PC-9 (cell line): ENCODE measurements at regions of chr4 and their contacts with region 1.

Region 1: DNA sequence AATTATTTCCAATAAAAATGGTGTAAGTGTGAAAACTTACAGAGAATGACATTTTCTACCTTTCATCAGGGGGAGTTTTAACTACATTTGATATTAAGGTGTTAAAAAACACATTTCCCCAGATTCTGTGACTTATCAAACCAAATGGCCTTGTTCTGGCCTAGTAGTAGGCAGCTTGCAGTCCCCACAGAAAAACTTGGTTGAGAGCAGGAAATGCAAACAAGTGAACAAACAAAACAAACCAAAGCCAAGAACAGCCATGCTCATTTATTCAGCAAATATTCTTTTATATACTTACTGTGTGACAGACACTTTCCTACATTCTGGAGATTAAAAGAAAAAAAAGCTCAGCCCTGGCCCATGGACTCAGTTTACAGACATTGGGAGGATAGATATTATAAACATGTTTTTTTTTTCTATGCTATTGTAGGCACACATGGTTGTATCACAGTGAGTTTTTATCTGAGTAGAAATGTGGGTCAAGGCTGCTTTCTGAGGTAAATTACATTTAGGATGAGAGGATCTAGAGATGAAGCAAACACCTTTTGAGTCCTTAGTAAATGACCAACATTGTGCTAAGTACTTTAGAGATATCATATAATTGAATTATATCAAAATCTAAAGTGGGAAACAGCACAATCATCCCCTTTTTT is 449.2 kb upstream of the AADAT start:
- DNase-seq: no peak
- H3K4me3 ChIP-seq: no peak overlapping the region
- H3K27ac ChIP-seq: no peak overlapping the region
- H3K4me1 ChIP-seq: no peaks in the 10 kb centered on the region
- H3K27me3 ChIP-seq: no peaks in the 10 kb centered on the region
- CTCF ChIP-seq: no peak

Region 2: DNA sequence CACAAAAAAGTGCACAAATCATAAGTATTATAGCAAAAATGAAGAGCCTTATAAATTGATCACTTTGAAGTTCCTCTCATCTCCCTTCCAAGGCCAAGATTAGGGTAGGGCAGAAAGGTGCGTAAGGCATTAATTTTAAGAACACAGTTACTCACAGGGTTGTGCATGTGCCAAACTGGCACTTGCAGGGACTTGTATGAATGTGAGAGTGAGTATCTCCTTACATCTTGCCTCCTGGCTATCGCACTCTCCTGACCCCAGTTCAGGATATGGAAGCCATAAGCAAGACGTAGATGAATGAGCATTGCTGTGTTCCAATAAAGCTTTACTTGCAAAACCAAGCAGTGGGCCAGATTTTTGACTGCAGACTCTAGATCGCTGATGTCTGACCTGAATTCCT is 60.9 kb after region 1 on chr4:
- CTCF ChIA-PET with region 1: no interaction called
- POLR2A ChIA-PET with region 1: no interaction called
- intact Hi-C with region 1: loop called (anchors 2 kb)
- DNase-seq: no peak
- H3K4me3 ChIP-seq: no peak overlapping the region
- H3K27ac ChIP-seq: no peak overlapping the region
- H3K4me1 ChIP-seq: no peaks in the 10 kb centered on the region
- H3K27me3 ChIP-seq: no peaks in the 10 kb centered on the region
- CTCF ChIP-seq: no peak

Region 3: GRCh38 chr4:170691168-170691567 is 152.2 kb after region 1 on chr4:
- CTCF ChIA-PET with region 1: no interaction called
- POLR2A ChIA-PET with region 1: no interaction called
- intact Hi-C with region 1: no loop called
- DNase-seq: no peak
- H3K4me3 ChIP-seq: no peak overlapping the region
- H3K27ac ChIP-seq: no peak overlapping the region
- H3K4me1 ChIP-seq: no peaks in the 10 kb centered on the region
- H3K27me3 ChIP-seq: no peaks in the 10 kb centered on the region
- CTCF ChIP-seq: no peak